ENCODE measurements at regions of chr15 and their contacts with region 1.

Region 1: DNA sequence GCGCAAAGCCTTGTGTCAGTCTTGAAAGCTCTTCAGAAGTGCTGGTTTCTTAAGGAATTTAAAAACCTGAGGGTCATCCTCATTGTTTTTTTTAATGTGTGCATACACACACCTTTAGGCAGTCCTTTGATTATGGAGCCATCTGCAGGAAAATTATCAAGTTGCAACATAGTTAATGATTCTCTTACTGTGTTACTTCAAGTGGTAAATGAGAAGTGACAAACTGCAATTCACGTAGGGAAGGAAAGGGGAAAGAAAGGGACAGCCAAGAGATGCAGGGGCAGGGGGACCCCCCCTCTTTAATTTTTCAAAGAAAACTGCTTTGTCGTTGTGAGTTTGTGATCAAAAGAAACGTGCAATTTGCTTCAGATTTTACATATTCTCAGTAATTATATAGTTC is 162.4 kb upstream of the CGNL1 start:
- DNase-seq: peak; percentile 67
- ATAC-seq: peak; percentile 48
- H3K4me3 ChIP-seq: no peak overlapping the region
- H3K27ac ChIP-seq: peak overlapping the region; percentile 23; the same call in 1 of the 2 replicates
- H3K4me1 ChIP-seq: peaks cover 13% of the 10 kb centered on the region
- H3K27me3 ChIP-seq: no peaks in the 10 kb centered on the region
- CTCF ChIP-seq: peak; percentile 71
- POLR2A ChIP-seq: no peak
- RAD21 ChIP-seq: peak; percentile 83

Region 2: GRCh38 chr15:56759450-56759845 is 454.4 kb before region 1 on chr15:
- CTCF ChIA-PET with region 1: no interaction called
- POLR2A ChIA-PET with region 1: no interaction called
- dilution Hi-C with region 1: no loop called
- in situ Hi-C with region 1: no loop called
- intact Hi-C with region 1: loop called (anchors 1 kb)
- DNase-seq: peak; percentile 98
- ATAC-seq: peak; percentile 64
- H3K4me3 ChIP-seq: no peak overlapping the region
- H3K27ac ChIP-seq: peak overlapping the region; percentile 39
- H3K4me1 ChIP-seq: peaks cover 12% of the 10 kb centered on the region
- H3K27me3 ChIP-seq: no peaks in the 10 kb centered on the region
- CTCF ChIP-seq: no peak
- POLR2A ChIP-seq: no peak
- RAD21 ChIP-seq: no peak

Region 3: GRCh38 chr15:56821721-56822425 is 392.0 kb before region 1 on chr15:
- CTCF ChIA-PET with region 1: interaction called, 3 read pairs
- POLR2A ChIA-PET with region 1: no interaction called
- dilution Hi-C with region 1: no loop called
- in situ Hi-C with region 1: no loop called
- intact Hi-C with region 1: loop called (anchors 1 kb)
- DNase-seq: peak; percentile 77
- ATAC-seq: peak; percentile 95
- H3K4me3 ChIP-seq: no peak overlapping the region
- H3K27ac ChIP-seq: no peak overlapping the region
- H3K4me1 ChIP-seq: peaks cover 6% of the 10 kb centered on the region
- H3K27me3 ChIP-seq: no peaks in the 10 kb centered on the region
- CTCF ChIP-seq: peak; percentile 79
- POLR2A ChIP-seq: no peak
- RAD21 ChIP-seq: peak; percentile 85

Region 4: GRCh38 chr15:57017024-57017423 is 196.8 kb before region 1 on chr15:
- CTCF ChIA-PET with region 1: no interaction called
- POLR2A ChIA-PET with region 1: no interaction called
- dilution Hi-C with region 1: no loop called
- in situ Hi-C with region 1: no loop called
- intact Hi-C with region 1: loop called (anchors 5 kb)
- DNase-seq: peak; percentile 20
- ATAC-seq: no peak; the same call in 1 of the 2 replicates
- H3K4me3 ChIP-seq: no peak overlapping the region
- H3K27ac ChIP-seq: no peak overlapping the region
- H3K4me1 ChIP-seq: peaks cover 7% of the 10 kb centered on the region
- H3K27me3 ChIP-seq: no peaks in the 10 kb centered on the region
- CTCF ChIP-seq: peak; percentile 34
- POLR2A ChIP-seq: no peak
- RAD21 ChIP-seq: peak; percentile 40; the same call in 1 of the 2 replicates

Region 5: GRCh38 chr15:57146506-57147201 is 67.2 kb before region 1 on chr15:
- CTCF ChIA-PET with region 1: interaction called, 19 read pairs
- POLR2A ChIA-PET with region 1: no interaction called
- dilution Hi-C with region 1: no loop called
- in situ Hi-C with region 1: loop called (anchors 5 kb)
- intact Hi-C with region 1: loop called (anchors 1 kb)
- DNase-seq: peak; percentile 73
- ATAC-seq: peak; percentile 52
- H3K4me3 ChIP-seq: peak overlapping the region; percentile 20; the same call in 1 of the 2 replicates
- H3K27ac ChIP-seq: no peak overlapping the region; the same call in 1 of the 2 replicates
- H3K4me1 ChIP-seq: peaks cover 25% of the 10 kb centered on the region
- H3K27me3 ChIP-seq: no peaks in the 10 kb centered on the region
- CTCF ChIP-seq: peak; percentile 88
- POLR2A ChIP-seq: no peak
- RAD21 ChIP-seq: peak; percentile 83

Region 6: DNA sequence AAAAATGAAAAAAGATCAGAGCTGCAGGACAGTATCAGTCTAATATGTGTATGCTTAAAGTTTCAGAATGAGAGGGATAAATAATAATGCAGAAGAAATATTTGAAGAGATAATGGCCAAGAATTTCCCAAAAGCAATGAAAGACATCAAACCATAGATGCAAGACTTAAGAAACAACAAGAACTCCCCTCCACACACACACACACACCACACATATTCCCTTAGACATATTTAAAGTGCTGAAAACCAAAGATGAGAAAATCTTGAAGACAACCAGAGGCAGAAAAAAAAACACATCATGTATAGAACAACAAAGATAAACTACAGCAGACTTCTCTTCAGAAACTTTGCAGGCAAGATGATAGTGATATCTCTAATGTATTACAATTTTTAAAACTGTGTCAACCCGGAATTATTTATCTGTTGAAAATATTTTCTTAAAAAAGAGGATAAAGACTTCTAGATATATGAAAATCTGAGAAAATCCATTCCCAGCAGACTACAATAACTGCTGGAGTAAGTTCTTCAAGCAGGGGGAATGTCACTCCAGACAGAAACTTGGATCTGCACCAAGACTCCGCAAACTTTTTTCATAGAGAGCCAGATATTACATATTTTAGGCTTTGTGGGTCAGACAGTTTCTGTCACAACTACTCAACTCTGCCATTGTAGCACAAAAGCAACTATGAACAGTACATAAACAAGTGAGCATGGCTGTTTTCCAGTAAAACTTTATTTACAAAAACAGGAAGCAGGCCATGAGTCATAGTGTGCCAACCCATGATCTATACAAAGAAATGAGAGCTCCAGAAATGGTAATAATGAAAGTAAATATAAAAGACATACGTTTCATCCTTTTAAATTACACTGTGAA is 61.0 kb before region 1 on chr15:
- CTCF ChIA-PET with region 1: interaction called, 11 read pairs
- POLR2A ChIA-PET with region 1: no interaction called
- dilution Hi-C with region 1: no loop called
- in situ Hi-C with region 1: loop called (anchors 5 kb)
- intact Hi-C with region 1: no loop called
- DNase-seq: peak; percentile 70
- ATAC-seq: peak; percentile 36; the same call in 1 of the 2 replicates
- H3K4me3 ChIP-seq: peak overlapping the region; percentile 2; the same call in 1 of the 2 replicates
- H3K27ac ChIP-seq: no peak overlapping the region
- H3K4me1 ChIP-seq: peaks cover 26% of the 10 kb centered on the region
- H3K27me3 ChIP-seq: no peaks in the 10 kb centered on the region
- CTCF ChIP-seq: no peak
- POLR2A ChIP-seq: no peak
- RAD21 ChIP-seq: no peak

Region 7: GRCh38 chr15:57527382-57528091 is 313.7 kb after region 1 on chr15:
- CTCF ChIA-PET with region 1: no interaction called
- POLR2A ChIA-PET with region 1: interaction called, 3 read pairs
- dilution Hi-C with region 1: no loop called
- in situ Hi-C with region 1: no loop called
- intact Hi-C with region 1: loop called (anchors 2 kb)
- DNase-seq: peak; percentile 88
- ATAC-seq: peak; percentile 83
- H3K4me3 ChIP-seq: no peak overlapping the region
- H3K27ac ChIP-seq: no peak overlapping the region
- H3K4me1 ChIP-seq: no peaks in the 10 kb centered on the region
- H3K27me3 ChIP-seq: peaks cover 39% of the 10 kb centered on the region
- CTCF ChIP-seq: peak; percentile 78
- POLR2A ChIP-seq: no peak
- RAD21 ChIP-seq: peak; percentile 92